Sigmoid colon (tissue), 7 donors: ENCODE measurements at regions of chr2 and their contacts with region 1.

Region 1: DNA sequence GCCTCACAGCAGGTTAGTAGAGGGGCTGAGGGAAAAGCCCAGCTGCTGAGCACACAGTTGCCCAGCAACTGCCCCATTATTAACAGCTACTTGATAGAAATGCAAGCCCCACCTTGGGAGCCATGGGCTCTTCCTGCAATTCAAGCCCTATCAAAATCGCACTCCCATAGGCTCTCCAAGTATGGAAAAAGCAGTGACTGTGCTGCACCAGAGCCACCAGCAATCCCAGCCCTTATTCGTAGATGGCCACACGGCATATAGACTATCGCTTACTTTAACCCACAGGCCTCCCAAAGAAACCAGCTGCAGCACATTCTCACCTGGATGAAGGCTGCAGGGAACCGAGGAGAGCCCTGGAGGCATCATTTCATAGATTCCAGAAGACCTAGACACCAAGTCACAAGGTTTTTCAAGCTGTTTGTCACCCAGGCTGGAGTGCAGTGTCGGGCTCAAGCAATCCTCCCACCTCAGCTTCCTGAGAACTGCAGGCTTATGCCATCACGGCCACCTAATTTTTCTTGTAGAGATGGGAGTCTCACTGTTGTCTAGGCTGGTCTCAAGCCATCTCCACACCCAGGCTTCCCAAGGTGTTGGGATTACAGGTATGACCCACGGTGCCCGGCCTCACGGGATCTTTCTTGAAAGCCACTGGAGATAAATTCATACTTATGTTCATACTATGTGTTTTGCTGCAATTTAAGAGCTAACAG is 11.3 kb downstream of the NCL start:
- DNase-seq: no peak
- H3K4me3 ChIP-seq: no peak overlapping the region
- H3K27ac ChIP-seq: peak overlapping the region in 3 of 4 donors; percentile 9 to 46 (median 23)
- H3K4me1 ChIP-seq: peaks cover 0 to 13% (median 2%) of the 10 kb centered on the region in 4 donors
- H3K27me3 ChIP-seq: no peaks in the 10 kb centered on the region
- CTCF ChIP-seq: no peak
- EP300 ChIP-seq: no peak
- POLR2A ChIP-seq: no peak

Region 2: GRCh38 chr2:231227309-231228162 is 225.4 kb before region 1 on chr2:
- intact Hi-C with region 1: loop called (anchors 5 kb)
- DNase-seq: peak; percentile 88
- H3K4me3 ChIP-seq: no peak overlapping the region
- H3K27ac ChIP-seq: peak overlapping the region; percentile 69 to 89 (median 82)
- H3K4me1 ChIP-seq: peaks cover 0 to 64% (median 49%) of the 10 kb centered on the region in 4 donors
- H3K27me3 ChIP-seq: no peaks in the 10 kb centered on the region
- CTCF ChIP-seq: peak; percentile 75 to 93 (median 84)
- EP300 ChIP-seq: no peak
- POLR2A ChIP-seq: no peak

Region 3: DNA sequence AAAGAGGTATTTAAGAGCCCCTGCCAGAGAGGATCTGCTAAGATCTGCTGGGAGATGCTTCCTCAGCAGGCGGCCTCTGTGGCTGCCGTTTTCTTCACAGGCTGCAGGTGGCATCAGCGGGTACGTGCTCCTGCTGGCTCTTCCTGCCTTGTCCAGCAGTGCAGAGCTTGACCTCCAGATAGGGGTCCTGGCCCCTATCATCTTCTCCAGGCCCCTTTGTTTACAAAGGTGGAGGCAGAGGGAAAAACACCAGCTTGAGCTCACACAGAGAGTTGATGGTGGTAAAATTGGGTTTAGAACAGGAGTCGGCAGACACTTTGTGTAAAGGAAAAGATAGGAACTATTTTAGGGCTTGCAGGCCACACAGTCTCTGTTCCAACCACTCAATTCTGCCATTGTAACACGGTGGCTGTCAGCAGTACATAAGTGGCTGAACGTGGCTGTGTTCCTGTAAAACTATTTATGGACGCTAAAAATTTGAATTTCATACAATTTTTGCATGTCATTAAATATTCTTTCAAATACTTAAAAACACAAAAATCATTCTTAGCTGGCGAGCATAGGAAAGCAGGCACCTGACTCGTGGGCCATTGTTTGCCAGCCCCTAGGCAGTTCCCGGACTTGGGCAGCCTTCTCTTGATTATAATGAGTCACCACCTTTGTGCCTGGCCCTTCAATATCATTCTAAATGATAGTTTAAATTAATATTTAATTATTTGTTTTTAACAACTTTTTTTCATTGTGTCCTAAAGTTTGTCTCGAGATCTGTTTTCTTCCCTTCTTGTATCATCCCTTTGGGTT is 155.6 kb before region 1 on chr2:
- intact Hi-C with region 1: loop called (anchors 5 kb)
- DNase-seq: peak; percentile 76
- H3K4me3 ChIP-seq: no peak overlapping the region
- H3K27ac ChIP-seq: no peak overlapping the region
- H3K4me1 ChIP-seq: no peaks in the 10 kb centered on the region
- H3K27me3 ChIP-seq: no peaks in the 10 kb centered on the region
- CTCF ChIP-seq: peak in 3 of 4 experiments; percentile 62 to 68 (median 65)
- EP300 ChIP-seq: no peak
- POLR2A ChIP-seq: no peak

Region 4: GRCh38 chr2:231411831-231412617 is 40.9 kb before region 1 on chr2:
- intact Hi-C with region 1: loop called (anchors 2 kb)
- DNase-seq: peak; percentile 94
- H3K4me3 ChIP-seq: peak overlapping the region; percentile 58 to 76 (median 72)
- H3K27ac ChIP-seq: peak overlapping the region in 3 of 4 donors; percentile 39 to 72 (median 70)
- H3K4me1 ChIP-seq: peaks cover 0 to 15% (median 13%) of the 10 kb centered on the region in 4 donors
- H3K27me3 ChIP-seq: no peaks in the 10 kb centered on the region
- CTCF ChIP-seq: peak; percentile 72 to 95 (median 82)
- EP300 ChIP-seq: no peak
- POLR2A ChIP-seq: no peak

Region 5: DNA sequence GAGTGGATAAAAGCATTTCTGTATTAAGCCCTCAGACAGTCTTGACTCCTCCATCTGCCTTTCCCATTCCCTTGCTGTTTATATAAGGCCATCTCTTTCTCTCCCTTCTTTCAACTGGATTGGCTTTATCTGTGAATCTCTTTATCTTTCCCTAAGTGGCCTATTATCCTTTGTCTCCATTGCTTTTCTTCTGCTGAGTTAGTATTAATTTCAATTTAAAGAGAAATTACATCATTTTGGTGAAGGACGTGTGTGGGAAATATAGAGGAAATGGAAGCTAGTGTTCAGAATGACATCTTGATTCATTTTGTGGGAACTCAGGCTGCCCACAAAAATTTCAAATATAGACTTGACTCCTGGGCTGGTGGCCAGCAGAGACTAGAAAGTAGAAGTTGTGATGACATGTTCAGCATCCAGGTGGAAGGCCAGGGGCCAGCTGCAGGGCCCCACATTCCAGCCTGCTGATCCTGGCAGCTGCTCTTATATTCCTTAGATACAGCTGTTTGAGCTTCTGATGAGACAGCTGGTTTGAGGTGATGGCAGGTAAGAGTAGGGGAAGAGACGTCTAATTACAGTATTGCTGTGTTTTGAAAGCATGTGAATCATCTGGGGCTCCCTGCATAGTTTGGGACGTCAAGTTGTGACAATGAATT is 560.9 kb after region 1 on chr2:
- intact Hi-C with region 1: no loop called
- DNase-seq: no peak
- H3K4me3 ChIP-seq: no peak overlapping the region
- H3K27ac ChIP-seq: no peak overlapping the region
- H3K4me1 ChIP-seq: peaks cover 0 to 25% (median 12%) of the 10 kb centered on the region in 4 donors
- H3K27me3 ChIP-seq: no peaks in the 10 kb centered on the region
- CTCF ChIP-seq: no peak
- EP300 ChIP-seq: no peak
- POLR2A ChIP-seq: no peak

Region 6: GRCh38 chr2:232927793-232928550 is 1475.0 kb after region 1 on chr2:
- intact Hi-C with region 1: no loop called
- DNase-seq: no peak
- H3K4me3 ChIP-seq: peak overlapping the region in 3 of 4 donors; percentile 25 to 46 (median 45)
- H3K27ac ChIP-seq: no peak overlapping the region
- H3K4me1 ChIP-seq: peaks cover 0 to 21% (median 15%) of the 10 kb centered on the region in 4 donors
- H3K27me3 ChIP-seq: peaks cover 32 to 56% (median 35%) of the 10 kb centered on the region in 3 donors
- CTCF ChIP-seq: no peak
- EP300 ChIP-seq: no peak
- POLR2A ChIP-seq: no peak